Left colon (tissue), 2 donors: ENCODE measurements at regions of chr5 and their contacts with region 1.

Region 1: DNA sequence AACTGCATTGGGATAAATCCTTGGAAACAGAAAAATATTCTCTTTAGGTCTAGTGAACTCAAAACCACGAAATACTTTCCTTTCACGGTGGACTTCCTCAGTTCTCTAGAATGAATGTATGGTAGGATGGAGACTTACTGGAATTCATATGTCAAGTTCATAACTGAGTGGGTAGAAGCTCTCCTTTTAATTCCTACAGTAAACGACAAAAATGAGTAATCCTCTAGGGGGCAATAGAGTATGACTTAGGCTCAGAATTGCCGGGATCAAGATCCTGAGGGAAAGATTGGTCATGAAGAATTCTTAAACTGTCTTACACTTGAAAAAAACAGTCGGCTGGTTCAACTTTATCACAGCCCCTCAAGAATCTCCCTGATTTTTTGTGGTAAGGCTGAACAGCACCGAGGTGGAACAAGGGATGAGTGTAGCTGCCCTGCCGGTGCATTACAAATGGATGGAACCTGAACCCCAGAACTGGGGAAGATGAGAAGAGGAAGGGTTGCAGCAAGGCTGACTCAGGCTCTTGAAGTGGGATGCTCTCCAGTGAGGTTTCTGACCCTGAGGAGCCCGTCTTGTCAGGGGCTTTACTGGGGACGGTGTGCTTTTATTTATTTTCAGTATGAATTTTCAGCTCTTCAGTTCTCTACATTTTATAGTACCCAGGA is 14.0 kb upstream of the LOX start:
- DNase-seq: no peak
- ATAC-seq: peak; percentile 44

Region 2: DNA sequence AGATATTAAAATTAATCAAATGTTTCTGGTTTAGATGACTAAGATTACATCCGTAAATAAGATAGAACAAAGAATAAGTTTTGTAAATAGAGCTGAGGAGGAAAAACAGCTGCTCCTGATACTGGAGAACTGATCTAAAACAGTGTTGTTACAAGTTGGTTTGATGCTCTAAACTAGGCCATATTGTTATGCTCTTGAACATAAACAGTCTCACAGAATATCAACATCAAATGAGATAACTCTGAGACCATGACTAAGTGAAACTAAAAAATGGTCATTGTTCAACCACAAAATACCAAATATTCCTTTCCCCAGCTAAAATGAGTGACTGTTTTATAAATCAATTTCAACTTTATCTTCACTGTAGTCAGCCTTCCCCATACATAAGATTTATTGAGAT is 146.8 kb before region 1 on chr5:
- intact Hi-C with region 1: no loop called
- DNase-seq: no peak
- ATAC-seq: no peak

Region 3: GRCh38 chr5:122156724-122157325 is 64.8 kb after region 1 on chr5:
- intact Hi-C with region 1: loop called in 1 of 2 experiments (anchors 2 kb)
- DNase-seq: no peak
- ATAC-seq: no peak

Region 4: DNA sequence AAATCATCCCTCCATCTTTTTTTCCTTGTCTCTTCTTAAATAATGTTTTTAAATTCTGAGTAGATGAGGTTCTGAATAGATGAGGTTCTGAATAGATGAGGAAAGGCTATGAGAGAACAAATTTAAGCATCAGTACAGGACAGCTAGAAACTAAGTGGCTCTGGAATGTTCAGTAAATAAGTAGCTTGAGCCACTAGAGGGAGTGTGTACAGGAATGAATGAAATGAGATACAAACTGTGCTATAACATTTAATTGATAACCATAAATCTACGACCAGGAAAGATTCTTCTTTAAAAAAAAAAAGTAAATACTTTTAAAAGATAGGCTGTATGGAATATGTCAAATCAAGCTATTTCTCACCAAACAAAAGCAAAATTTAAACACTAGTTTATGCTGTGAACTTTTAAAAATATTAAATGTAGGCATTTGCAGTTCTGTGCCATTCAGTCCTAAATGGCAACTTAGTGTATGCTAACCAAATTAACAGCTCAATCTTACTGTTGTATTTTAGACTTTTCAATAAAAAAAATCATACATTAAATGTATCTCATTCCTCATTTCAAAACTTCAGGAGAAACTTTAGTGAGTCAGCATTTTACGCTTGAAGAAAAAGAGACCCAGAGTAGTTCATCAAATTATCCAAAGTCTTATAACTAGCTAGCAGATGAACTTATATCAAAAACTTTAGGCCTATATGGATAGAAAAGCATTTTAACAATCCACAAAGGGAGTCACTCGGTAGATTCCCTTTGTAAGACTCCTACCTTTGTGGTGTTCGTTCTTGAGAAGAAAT is 612.4 kb after region 1 on chr5:
- intact Hi-C with region 1: no loop called
- DNase-seq: no peak
- ATAC-seq: peak; percentile 64